ENCODE measurements at regions of chr10 and their contacts with region 1.

Region 1: GRCh38 chr10:68901104-68901927 is at the start of gene DDX50:
- DNase-seq: peak; percentile 99
- H3K4me3 Mint-ChIP-seq: peak within 1 kb of the TSS; percentile 96
- H3K27ac Mint-ChIP-seq: peak within 1 kb of the TSS; percentile 99
- H3K4me1 Mint-ChIP-seq: peaks cover 39% of the 10 kb centered on the region
- H3K27me3 Mint-ChIP-seq: peaks cover 3% of the 10 kb centered on the region
- total RNA-seq, gene DDX50: 60.2 and 63.0 TPM in 2 replicates

Region 2: GRCh38 chr10:68331455-68332258 is 569.7 kb before region 1 on chr10 and contains the start of gene HNRNPH3:
- intact Hi-C with region 1: loop called (anchors 5 kb)
- DNase-seq: peak; percentile 100
- H3K4me3 Mint-ChIP-seq: peak within 1 kb of the TSS; percentile 99
- H3K27ac Mint-ChIP-seq: peak within 1 kb of the TSS; percentile 100
- H3K4me1 Mint-ChIP-seq: peaks cover 47% of the 10 kb centered on the region
- H3K27me3 Mint-ChIP-seq: peaks cover 2% of the 10 kb centered on the region
- total RNA-seq, gene HNRNPH3: 200 and 206 TPM in 2 replicates

Region 3: DNA sequence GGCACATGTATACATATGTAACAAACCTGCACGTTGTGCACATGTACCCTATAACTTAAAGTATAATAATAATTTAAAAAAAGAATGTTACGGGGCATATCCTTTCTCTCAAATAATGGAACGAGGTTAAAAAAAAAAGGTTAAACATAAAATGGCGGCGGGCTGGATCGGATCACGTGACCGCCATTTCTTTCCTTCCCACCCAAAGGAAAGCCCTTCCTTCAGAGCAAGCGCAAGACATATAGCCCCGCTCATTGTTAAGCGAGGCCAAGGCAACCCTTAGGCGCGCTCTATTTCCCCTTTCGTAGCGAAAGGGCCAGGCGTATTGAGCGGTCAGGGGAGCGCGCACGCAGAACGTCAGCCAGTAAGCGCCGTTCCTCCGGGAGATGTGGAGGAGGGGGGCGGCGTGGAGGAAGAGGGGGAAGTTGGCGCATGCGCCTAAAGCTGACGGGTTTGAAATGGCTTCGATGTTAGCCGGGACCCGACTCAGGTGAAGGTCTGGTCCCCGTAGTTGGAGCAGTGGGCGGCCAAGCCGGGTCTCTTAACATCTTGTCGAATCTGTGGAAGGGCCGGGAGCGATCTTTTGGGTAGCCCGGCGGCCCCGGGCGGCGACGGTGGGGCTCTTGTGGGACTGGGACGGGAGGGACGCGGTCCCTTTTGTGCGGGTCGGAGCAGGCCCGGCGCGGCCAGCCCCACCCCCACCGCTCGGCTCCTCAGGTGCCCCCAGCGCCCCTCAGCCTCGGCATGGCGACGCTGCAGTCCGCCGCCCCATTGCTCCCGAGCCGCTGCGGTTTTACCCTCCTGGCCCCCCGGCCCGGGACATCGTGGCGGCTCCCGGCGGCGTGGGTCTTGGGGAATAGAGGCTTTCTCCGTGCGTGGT is 180.3 kb before region 1 on chr10 and contains the start of gene CCAR1:
- intact Hi-C with region 1: loop called (anchors 1 kb)
- DNase-seq: peak; percentile 98
- H3K4me3 Mint-ChIP-seq: peak within 1 kb of the TSS; percentile 95
- H3K27ac Mint-ChIP-seq: peak within 1 kb of the TSS; percentile 98
- H3K4me1 Mint-ChIP-seq: peaks cover 14% of the 10 kb centered on the region
- H3K27me3 Mint-ChIP-seq: no peaks in the 10 kb centered on the region
- total RNA-seq, gene CCAR1: 95.2 and 112 TPM in 2 replicates

Region 4: DNA sequence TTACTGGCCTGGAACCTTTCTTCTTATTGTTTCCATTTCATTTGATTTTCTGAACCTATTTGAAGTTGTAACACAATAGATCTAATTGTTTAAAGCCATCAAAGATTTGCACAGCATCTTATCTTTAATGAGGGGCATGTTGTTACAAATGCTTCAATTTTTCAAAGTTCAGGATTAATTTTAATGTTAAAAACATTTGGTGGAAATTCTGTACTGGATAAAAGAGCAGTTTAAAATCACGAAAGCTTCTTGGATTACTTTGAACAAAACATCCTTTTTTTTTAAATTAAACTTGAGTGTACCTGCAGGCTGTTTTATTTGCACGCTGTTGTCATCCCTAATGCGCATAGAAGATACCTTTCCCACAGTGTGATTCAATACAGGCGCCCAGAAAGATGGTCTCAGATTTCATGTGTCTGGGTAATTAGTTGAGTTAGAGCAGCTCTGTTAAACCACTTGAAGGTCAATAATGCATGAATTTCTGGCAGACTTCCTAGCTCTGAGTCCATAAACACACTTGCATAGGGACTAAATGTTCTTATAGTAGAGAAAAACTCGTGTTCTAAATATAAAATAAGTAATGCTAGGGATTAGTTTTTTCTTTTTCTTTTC is 29.5 kb before region 1 on chr10:
- intact Hi-C with region 1: no loop called
- DNase-seq: no peak
- H3K4me3 Mint-ChIP-seq: no peak overlapping the region
- H3K27ac Mint-ChIP-seq: no peak overlapping the region
- H3K4me1 Mint-ChIP-seq: peaks cover 7% of the 10 kb centered on the region
- H3K27me3 Mint-ChIP-seq: no peaks in the 10 kb centered on the region

Region 5: GRCh38 chr10:68955832-68956532 is 54.7 kb after region 1 on chr10 and contains the start of gene DDX21:
- intact Hi-C with region 1: loop called (anchors 1 kb)
- DNase-seq: peak; percentile 97
- H3K4me3 Mint-ChIP-seq: peak within 1 kb of the TSS; percentile 93
- H3K27ac Mint-ChIP-seq: peak within 1 kb of the TSS; percentile 99
- H3K4me1 Mint-ChIP-seq: peaks cover 26% of the 10 kb centered on the region
- H3K27me3 Mint-ChIP-seq: no peaks in the 10 kb centered on the region
- total RNA-seq, gene DDX21: 284 and 286 TPM in 2 replicates

Region 6: DNA sequence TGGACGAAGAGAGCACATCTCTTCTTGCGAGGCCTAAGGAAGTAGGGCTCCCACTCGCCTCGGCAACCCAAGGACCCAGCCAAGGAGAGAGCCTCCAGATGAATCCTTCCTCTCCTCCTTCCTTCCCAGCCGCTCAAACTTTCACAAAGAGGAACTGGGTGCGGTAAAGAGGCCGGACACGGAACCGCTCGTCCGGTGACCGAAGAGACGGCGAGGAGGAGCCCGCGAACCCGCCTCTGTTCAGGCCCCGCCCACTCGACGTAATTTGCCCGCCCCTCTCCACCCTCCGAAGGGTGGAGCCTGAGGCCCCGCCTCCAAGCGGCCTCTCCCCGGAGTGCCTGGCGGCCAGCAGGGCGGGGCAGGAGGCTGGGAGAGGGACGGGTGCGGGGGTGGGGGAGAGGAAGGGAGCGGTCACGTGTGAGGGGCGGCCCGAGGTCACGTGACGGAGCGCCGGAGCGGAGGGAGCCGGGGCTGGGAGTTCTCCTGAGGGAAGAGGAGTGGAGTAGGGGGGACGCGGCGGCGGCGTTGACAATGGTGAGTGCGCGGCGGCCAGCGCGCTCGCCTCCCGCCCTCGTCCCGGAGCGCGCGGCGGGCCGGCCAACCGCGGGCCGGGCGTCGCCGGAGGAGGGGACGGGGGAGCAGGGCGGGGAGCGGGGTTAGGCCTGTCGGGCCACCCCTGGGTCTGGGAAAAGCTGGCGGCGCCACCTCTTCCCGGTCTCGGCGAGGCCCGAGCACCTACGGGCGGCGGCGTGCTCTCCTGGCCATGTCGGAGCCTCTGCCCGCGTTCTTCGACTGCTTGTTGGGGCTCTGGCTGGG is 222.6 kb after region 1 on chr10 and contains the start of gene VPS26A:
- intact Hi-C with region 1: loop called (anchors 5 kb)
- DNase-seq: peak; percentile 100
- H3K4me3 Mint-ChIP-seq: peak within 1 kb of the TSS; percentile 96
- H3K27ac Mint-ChIP-seq: peak within 1 kb of the TSS; percentile 94
- H3K4me1 Mint-ChIP-seq: peaks cover 22% of the 10 kb centered on the region
- H3K27me3 Mint-ChIP-seq: peaks cover 3% of the 10 kb centered on the region
- total RNA-seq, gene VPS26A: 29.2 and 30.8 TPM in 2 replicates